Activated CD4-positive, alpha-beta memory T cell treated with anti-CD3 and anti-CD28 coated beads for 36 hours (primary cell): ENCODE measurements at regions of chr11 and their contacts with region 1.

Region 1: DNA sequence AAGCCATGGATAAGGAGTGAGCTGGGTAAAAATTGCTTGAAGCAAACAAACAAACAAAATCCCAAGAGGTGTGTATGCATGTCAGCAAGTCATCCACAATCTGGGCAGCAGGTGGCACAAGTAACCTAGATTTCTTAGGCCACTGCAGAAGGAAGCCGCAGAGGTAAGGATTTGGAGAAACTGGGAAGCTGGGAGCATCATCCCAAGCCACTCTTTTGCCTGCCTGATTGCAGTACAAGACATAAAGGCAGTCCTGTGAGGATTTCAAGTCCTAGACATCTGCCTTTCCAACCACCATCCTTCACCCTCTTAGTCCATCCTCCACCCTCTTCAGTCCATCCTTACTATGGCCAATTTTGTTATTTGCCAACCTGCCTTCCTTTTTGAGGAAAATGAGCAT is 67.2 kb upstream of the BMAL1 start:
- DNase-seq: peak; percentile 46
- H3K4me3 Mint-ChIP-seq: no peak overlapping the region
- H3K27ac Mint-ChIP-seq: no peak overlapping the region
- H3K4me1 Mint-ChIP-seq: peaks cover 40% of the 10 kb centered on the region
- H3K27me3 Mint-ChIP-seq: no peaks in the 10 kb centered on the region

Region 2: GRCh38 chr11:12673924-12674570 is 536.4 kb before region 1 on chr11 and contains the start of gene TEAD1:
- CTCF ChIA-PET with region 1: no interaction called
- POLR2A ChIA-PET with region 1: no interaction called
- intact Hi-C with region 1: loop called (anchors 10 kb)
- DNase-seq: peak; percentile 91
- H3K4me3 Mint-ChIP-seq: peak within 1 kb of the TSS; percentile 76
- H3K27ac Mint-ChIP-seq: no peak within 1 kb of the TSS
- H3K4me1 Mint-ChIP-seq: peaks cover 8% of the 10 kb centered on the region
- H3K27me3 Mint-ChIP-seq: peaks cover 61% of the 10 kb centered on the region
- total RNA-seq, gene TEAD1: 1.0 to 1.5 TPM

Region 3: DNA sequence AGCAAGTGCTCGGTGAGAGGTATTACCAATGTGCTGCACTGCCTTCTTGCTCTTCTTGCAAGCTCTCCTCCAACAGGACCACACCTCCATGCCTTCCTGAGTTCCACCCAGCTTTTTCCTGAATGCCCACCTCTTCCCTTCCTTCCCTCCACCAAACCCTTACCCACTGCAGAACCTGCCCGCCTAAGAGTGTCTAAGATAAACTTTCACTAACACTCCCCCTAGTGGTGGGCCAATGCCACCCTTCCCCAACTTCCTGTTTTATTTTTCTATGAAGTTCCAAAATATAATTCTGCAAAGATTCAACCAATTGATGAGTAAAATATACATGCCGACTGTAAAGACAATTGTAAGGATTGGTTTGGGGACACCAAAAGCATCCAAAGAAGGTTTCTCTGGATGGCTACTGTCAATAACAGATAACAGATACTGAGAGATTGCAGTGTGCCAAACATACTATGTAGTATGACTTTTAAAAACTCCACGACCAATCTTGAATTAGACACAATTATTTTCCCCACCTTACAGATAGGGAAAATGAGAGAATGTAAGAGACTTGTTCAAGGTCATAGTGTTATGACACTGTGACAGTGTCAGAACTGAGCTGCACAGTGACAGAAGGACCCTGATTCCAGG is 28.6 kb after region 1 on chr11:
- CTCF ChIA-PET with region 1: interaction called, 42 read pairs
- POLR2A ChIA-PET with region 1: no interaction called
- intact Hi-C with region 1: loop called (anchors 2 kb)
- DNase-seq: peak; percentile 55
- H3K4me3 Mint-ChIP-seq: no peak overlapping the region
- H3K27ac Mint-ChIP-seq: no peak overlapping the region
- H3K4me1 Mint-ChIP-seq: no peaks in the 10 kb centered on the region
- H3K27me3 Mint-ChIP-seq: peaks cover 14% of the 10 kb centered on the region

Region 4: DNA sequence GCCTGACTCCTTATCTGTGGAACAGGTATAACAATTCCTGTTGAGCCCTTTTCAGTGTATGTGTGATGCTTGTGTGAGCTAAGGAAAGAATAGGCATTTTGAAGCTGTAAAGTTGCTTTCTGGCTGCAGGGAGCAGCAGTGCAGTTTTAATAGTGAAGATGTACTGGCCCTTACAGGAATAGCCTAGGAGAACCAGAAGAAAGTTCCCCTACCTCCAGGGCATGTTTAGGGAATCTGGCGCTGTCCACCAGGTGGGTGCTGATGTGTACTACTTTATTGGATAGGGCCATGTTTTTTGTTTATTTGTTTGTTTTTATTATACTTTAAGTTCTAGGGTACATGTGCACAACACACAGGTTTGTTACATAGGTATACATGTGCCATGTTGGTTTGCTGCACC is 78.7 kb after region 1 on chr11:
- CTCF ChIA-PET with region 1: interaction called, 4 read pairs
- POLR2A ChIA-PET with region 1: interaction called, 4 read pairs
- intact Hi-C with region 1: loop called (anchors 2 kb)
- DNase-seq: no peak
- H3K4me3 Mint-ChIP-seq: no peak overlapping the region
- H3K27ac Mint-ChIP-seq: no peak overlapping the region
- H3K4me1 Mint-ChIP-seq: peaks cover 81% of the 10 kb centered on the region
- H3K27me3 Mint-ChIP-seq: no peaks in the 10 kb centered on the region

Region 5: DNA sequence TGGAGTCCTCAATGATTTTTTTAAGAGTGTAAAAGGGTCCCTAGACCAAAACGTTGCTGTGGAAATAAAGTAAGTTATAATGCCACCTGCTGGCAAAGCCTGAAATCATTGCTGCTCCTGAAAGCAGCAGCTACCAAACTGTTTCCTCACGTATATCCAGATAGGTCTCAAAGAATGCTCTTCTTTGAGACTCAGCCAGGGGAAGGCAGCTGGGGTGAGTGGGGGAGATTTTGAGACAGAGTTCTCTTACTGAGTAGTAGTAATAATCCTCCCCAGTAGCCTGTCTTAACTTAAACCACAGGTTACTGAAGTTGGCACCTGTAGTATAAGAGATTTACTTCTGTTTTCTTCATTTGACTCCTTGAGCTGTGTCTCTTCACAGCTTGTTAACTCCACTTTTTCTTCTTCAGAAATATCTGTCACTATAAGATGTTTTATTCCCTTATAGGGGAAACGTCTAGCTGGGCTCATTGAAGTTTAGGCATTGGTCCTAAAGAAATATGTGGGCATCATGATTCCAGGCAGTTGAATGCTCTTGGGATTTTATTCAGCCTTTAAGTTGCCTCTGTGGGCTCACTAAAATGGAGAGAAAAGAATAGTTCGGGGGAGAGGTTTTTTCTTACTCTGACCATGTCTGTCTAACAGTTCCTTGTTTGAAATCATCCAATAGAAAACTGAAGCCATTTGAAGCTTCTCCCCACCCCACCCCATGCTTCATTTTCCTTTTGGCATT is 174.7 kb after region 1 on chr11:
- CTCF ChIA-PET with region 1: interaction called, 15 read pairs
- POLR2A ChIA-PET with region 1: no interaction called
- intact Hi-C with region 1: no loop called
- DNase-seq: peak; percentile 34
- H3K4me3 Mint-ChIP-seq: no peak overlapping the region
- H3K27ac Mint-ChIP-seq: peak overlapping the region; percentile 40
- H3K4me1 Mint-ChIP-seq: no peaks in the 10 kb centered on the region
- H3K27me3 Mint-ChIP-seq: no peaks in the 10 kb centered on the region

Region 6: GRCh38 chr11:13668102-13668956 is 457.9 kb after region 1 on chr11 and contains the start of gene FAR1:
- CTCF ChIA-PET with region 1: no interaction called
- POLR2A ChIA-PET with region 1: no interaction called
- intact Hi-C with region 1: loop called (anchors 2 kb)
- DNase-seq: peak; percentile 98
- H3K4me3 Mint-ChIP-seq: peak within 1 kb of the TSS; percentile 93
- H3K27ac Mint-ChIP-seq: peak within 1 kb of the TSS; percentile 91
- H3K4me1 Mint-ChIP-seq: peaks cover 40% of the 10 kb centered on the region
- H3K27me3 Mint-ChIP-seq: no peaks in the 10 kb centered on the region
- total RNA-seq, gene FAR1: 39.5 to 41.3 TPM